PC-9 (cell line): ENCODE measurements at regions of chr5 and their contacts with region 1.

Region 1: GRCh38 chr5:42811591-42812446 is at the start of gene SELENOP:
- DNase-seq: peak; percentile 40 to 65
- H3K4me3 ChIP-seq: no peak within 1 kb of the TSS
- H3K27ac ChIP-seq: 0 out of 2 replicates have a peak within 1 kb of the TSS, but pooled peaks have one; percentile 16
- H3K4me1 ChIP-seq: peaks cover 14% of the 10 kb centered on the region
- H3K27me3 ChIP-seq: no peaks in the 10 kb centered on the region
- CTCF ChIP-seq: no peak
- total RNA-seq, gene SELENOP: 4.6 and 5.3 TPM in 2 replicates

Region 2: DNA sequence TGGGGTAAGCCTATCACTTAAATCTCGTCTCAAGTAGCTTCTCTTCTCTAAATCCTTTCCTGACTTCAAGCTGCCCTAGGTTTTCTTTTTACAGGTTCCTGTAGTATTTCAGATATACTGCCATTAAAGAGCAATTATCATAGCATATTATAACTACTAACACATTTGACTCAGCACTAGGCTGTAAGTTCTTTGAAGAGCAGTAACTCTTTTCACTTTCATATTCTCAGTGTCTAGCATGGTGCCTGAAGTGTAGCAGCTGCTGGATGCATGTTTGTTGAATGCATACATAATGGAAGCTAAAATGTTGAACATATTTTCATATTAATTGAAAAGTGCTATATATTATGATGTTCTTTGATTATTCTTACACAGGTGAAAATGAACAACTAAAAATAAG is 32.7 kb before region 1 on chr5:
- CTCF ChIA-PET with region 1: no interaction called
- POLR2A ChIA-PET with region 1: no interaction called
- intact Hi-C with region 1: no loop called
- DNase-seq: no peak
- H3K4me3 ChIP-seq: no peak overlapping the region
- H3K27ac ChIP-seq: no peak overlapping the region
- H3K4me1 ChIP-seq: no peaks in the 10 kb centered on the region
- H3K27me3 ChIP-seq: peaks cover 7% of the 10 kb centered on the region; the same call in 1 of the 2 replicates
- CTCF ChIP-seq: no peak

Region 3: DNA sequence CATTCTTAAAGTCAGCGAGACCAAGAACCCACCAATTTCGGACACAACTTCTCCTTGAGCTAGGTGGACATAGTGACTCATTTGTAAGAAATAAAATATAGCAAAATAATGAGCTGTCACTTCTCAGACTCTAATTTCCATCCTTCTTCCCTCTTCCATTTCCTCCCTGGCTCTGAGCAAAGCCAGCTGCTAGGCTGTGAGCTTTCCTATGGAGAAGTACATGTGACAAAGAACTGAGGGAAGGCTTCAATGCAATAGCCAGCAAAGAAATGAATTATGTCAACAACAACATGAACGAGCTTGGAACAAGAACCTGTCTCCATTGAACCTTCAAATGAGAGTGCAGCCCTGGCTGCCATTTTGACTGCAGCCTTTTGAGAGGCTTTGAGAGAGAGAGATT is 25.8 kb after region 1 on chr5:
- CTCF ChIA-PET with region 1: no interaction called
- POLR2A ChIA-PET with region 1: interaction called, 14 read pairs
- intact Hi-C with region 1: no loop called
- DNase-seq: no peak
- H3K4me3 ChIP-seq: no peak overlapping the region
- H3K27ac ChIP-seq: no peak overlapping the region
- H3K4me1 ChIP-seq: no peaks in the 10 kb centered on the region
- H3K27me3 ChIP-seq: no peaks in the 10 kb centered on the region
- CTCF ChIP-seq: no peak